ENCODE measurements at regions of chr13 and their contacts with region 1.

Region 1: GRCh38 chr13:23375001-23375971 is 58.2 kb downstream of the SACS start:
- DNase-seq: peak; percentile 95 to 99 (median 97)
- ATAC-seq: peak; percentile 87
- H3K4me3 ChIP-seq: peak overlapping the region; percentile 52 to 69
- H3K4me3 Mint-ChIP-seq: peak overlapping the region; percentile 81
- H3K27ac ChIP-seq: peak overlapping the region; percentile 42 to 68
- H3K27ac Mint-ChIP-seq: peak overlapping the region; percentile 58
- H3K4me1 ChIP-seq: peaks cover 37% of the 10 kb centered on the region
- H3K4me1 Mint-ChIP-seq: peaks cover 57% of the 10 kb centered on the region
- H3K27me3 ChIP-seq: no peaks in the 10 kb centered on the region
- H3K27me3 Mint-ChIP-seq: no peaks in the 10 kb centered on the region
- CTCF ChIP-seq: peak; percentile 37

Region 2: DNA sequence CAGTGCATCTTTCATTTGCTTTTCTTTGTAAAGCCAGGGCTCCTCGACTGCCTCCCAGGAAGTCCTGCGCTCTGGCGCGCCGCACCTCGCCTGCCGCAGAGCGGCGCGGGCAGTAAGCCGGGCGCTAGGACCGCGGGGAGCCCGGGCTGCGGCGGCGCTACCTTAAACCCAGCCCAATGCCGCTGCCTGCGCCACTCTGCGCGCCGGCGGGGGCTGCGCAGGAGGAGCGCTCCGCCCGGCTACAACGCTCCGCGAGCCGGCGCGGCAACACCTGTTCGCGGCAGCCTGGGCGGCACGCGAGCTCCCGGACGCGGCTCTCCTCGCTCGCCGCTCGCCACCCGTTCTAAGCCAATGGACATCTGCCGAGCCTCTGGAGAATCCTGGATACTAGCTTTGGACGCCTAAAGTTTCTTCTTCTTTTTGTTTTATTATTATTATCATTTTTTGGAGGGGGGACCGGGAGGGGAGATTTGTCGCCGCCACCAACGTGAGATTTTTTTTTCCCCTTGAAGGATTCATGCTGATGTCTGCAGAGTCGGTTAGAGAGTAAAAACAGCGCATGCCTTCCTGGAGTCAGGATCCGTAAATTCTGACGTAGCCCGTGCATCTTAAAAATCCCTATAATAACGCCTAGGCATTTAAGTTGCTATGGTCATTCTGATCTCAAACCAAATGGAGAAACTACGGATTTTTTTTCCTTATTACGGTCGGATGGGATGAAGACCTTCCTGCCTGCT is 1704.2 kb before region 1 on chr13 and contains the start of gene FGF9:
- CTCF ChIA-PET with region 1: no interaction called
- POLR2A ChIA-PET with region 1: no interaction called
- intact Hi-C with region 1: loop called (anchors 10 kb)
- DNase-seq: peak; percentile 57 to 93 (median 78)
- ATAC-seq: peak; percentile 66
- H3K4me3 ChIP-seq: peak within 1 kb of the TSS; percentile 67 to 80
- H3K4me3 Mint-ChIP-seq: peak within 1 kb of the TSS; percentile 88
- H3K27ac ChIP-seq: peak within 1 kb of the TSS; percentile 32 to 56
- H3K27ac Mint-ChIP-seq: peak within 1 kb of the TSS; percentile 88
- H3K4me1 ChIP-seq: peaks cover 30% of the 10 kb centered on the region
- H3K4me1 Mint-ChIP-seq: peaks cover 49% of the 10 kb centered on the region
- H3K27me3 ChIP-seq: peaks cover 0 to 4% of the 10 kb centered on the region in 2 experiments
- H3K27me3 Mint-ChIP-seq: peaks cover 10% of the 10 kb centered on the region
- CTCF ChIP-seq: no peak
- total RNA-seq, gene FGF9: 7.6 to 8.2 TPM

Region 3: DNA sequence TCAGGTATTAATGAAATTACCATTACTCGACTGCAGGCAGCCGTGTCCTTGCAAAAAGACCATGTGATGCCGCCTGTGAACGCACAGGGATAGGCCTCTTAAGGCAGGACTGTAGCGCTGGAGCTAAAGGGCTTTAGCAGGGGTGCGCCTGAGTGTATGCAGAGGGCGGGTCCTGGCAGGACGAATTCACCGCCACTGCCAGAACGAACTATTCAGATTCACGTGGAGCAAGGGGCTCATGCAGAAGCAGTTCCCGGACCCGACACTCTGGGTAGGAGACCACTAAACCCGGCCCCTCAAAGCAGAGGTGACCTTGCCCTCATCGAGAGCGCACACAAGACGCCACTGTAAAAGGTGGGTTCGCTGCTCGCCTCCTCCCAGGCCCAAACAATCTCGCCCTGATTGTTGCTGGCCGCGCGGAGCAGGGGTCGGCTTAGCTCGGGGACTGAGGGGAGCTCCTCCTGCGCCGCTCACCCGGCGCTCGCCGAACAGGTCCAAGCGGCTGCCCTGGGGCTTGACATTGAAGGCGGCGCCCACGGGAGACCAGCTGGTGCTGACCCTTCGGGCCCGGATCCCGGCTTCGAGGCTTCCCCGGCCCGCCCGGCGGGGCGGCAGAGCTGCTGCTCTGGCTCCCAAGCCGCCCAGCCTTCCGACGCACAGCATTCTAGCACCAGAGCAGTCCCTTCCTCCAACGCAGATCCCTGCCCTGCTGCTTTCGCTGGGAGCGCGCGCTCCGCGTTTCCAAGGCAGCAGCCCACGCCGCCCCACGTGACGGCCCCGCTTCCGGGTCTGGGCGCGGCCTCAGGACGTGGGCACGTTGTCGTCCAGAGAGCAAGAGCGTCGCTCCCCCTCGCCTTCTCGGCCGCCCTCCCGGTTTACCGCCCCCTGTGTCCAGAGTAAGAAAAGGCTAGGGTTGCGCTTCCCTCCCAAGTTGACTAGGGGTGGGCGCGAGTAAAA is 513.6 kb after region 1 on chr13 and contains the start of gene MIPEP:
- CTCF ChIA-PET with region 1: no interaction called
- POLR2A ChIA-PET with region 1: no interaction called
- intact Hi-C with region 1: loop called (anchors 1 to 5 kb)
- DNase-seq: peak; percentile 73 to 95 (median 87)
- ATAC-seq: peak; percentile 93
- H3K4me3 ChIP-seq: peak within 1 kb of the TSS; percentile 79
- H3K4me3 Mint-ChIP-seq: peak within 1 kb of the TSS; percentile 90
- H3K27ac ChIP-seq: peak within 1 kb of the TSS; percentile 61 to 71
- H3K27ac Mint-ChIP-seq: peak within 1 kb of the TSS; percentile 88
- H3K4me1 ChIP-seq: peaks cover 7% of the 10 kb centered on the region
- H3K4me1 Mint-ChIP-seq: peaks cover 23% of the 10 kb centered on the region
- H3K27me3 ChIP-seq: no peaks in the 10 kb centered on the region
- H3K27me3 Mint-ChIP-seq: peaks cover 3% of the 10 kb centered on the region
- CTCF ChIP-seq: peak; percentile 65
- total RNA-seq, gene MIPEP: 3.0 to 3.8 TPM

Region 4: DNA sequence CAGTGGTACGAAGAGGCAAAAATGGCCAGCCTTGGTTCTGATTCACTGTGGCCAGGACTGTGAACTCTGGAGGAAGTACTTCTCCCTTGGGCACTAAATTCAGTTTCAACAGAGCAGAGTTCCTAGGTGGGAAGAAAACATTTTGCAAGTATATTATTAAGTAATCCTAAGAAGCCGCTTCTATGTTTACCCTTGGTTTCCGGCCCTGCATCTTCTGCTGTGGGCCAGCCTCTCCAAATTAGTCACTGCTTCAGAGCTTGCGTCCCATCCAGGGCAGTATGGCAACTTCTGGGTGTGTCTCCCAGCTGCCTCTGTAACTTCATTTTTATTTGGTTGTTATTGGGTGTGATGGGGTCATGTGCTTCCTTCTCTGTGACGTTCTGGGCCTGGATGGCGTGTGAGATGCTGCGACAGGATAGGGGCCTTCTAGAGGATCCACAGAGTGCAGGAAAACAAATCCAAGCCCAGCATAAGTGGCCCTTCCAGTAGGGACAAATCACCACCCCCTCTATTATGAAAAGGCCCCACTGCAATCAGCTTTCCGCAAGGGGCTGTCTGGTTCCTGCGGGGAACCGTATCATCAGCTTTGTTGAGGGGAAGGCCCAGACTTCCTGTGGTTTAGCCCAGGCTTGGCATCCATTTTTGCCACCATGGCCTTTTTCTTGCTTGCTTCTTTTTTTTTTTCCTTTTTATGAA is 879.0 kb after region 1 on chr13:
- CTCF ChIA-PET with region 1: no interaction called
- POLR2A ChIA-PET with region 1: no interaction called
- intact Hi-C with region 1: loop called in 1 of 2 experiments (anchors 5 kb)
- DNase-seq: peak in 8 of 9 experiments; percentile 44 to 91 (median 69)
- ATAC-seq: peak; percentile 58
- H3K4me3 ChIP-seq: peak overlapping the region; percentile 73 to 94
- H3K4me3 Mint-ChIP-seq: peak overlapping the region; percentile 91
- H3K27ac ChIP-seq: peak overlapping the region; percentile 77 to 84
- H3K27ac Mint-ChIP-seq: peak overlapping the region; percentile 98
- H3K4me1 ChIP-seq: peaks cover 85% of the 10 kb centered on the region
- H3K4me1 Mint-ChIP-seq: peaks cover 94% of the 10 kb centered on the region
- H3K27me3 ChIP-seq: no peaks in the 10 kb centered on the region
- H3K27me3 Mint-ChIP-seq: no peaks in the 10 kb centered on the region
- CTCF ChIP-seq: no peak

Region 5: DNA sequence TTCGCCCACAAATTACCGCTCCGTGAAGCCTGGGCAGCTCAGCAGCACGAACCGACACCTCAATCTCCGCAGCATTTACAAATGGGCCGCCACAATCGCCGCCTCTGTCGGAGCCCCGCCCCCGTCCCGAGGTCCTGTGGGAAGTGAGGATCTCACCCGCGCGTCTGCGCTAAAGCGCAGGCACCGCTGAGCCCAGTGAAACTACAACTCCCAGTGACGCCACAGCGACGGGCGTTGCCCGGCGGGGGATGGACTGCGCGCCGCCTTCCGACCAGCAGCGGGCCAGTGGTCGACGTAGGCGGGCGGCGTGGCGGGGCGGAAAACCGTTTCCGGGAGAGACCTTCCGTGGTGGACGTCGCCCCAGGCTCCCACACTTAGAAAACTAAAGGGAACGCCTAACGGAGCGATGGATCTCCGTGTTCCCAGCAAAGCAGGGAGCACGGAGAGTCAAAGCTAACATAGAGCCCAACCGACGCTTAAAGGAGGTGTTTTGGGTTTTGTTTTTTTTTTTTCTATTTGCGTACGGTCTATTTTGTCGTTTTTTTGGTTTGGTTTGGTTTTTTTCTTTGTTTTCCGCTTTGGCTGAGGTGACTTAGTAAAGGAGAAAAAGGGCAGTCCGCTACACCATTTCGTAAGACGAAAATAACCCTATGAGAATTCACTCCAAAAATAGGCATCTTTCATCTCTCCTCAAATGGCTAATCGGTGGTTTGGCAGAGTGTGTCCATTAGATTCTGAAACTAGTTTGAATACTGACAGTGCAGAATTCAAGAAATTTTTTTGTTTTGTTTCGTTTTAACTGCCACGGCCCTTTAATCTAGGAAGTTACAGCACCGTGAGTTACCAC is 1547.7 kb after region 1 on chr13:
- CTCF ChIA-PET with region 1: no interaction called
- POLR2A ChIA-PET with region 1: no interaction called
- intact Hi-C with region 1: loop called in 1 of 2 experiments (anchors 5 kb)
- DNase-seq: peak; percentile 85 to 96 (median 94)
- ATAC-seq: peak; percentile 99
- H3K4me3 ChIP-seq: peak overlapping the region; percentile 82 to 95
- H3K4me3 Mint-ChIP-seq: peak overlapping the region; percentile 96
- H3K27ac ChIP-seq: peak overlapping the region; percentile 70 to 94
- H3K27ac Mint-ChIP-seq: peak overlapping the region; percentile 92
- H3K4me1 ChIP-seq: peaks cover 9% of the 10 kb centered on the region
- H3K4me1 Mint-ChIP-seq: peaks cover 15% of the 10 kb centered on the region
- H3K27me3 ChIP-seq: no peaks in the 10 kb centered on the region
- H3K27me3 Mint-ChIP-seq: no peaks in the 10 kb centered on the region
- CTCF ChIP-seq: no peak